ENCODE measurements at regions of chr16 and their contacts with region 1.

Region 1: GRCh38 chr16:50354629-50355456 is 13.9 kb downstream of the BRD7 start:
- DNase-seq: no peak
- ATAC-seq: no peak
- H3K4me3 ChIP-seq: no peak overlapping the region
- H3K27ac ChIP-seq: no peak overlapping the region
- H3K4me1 ChIP-seq: no peaks in the 10 kb centered on the region
- H3K27me3 ChIP-seq: no peaks in the 10 kb centered on the region
- CTCF ChIP-seq: peak; percentile 31 to 52 (median 50); a peak in 4 of 6 replicates
- EP300 ChIP-seq: no peak
- POLR2A ChIP-seq: no peak
- RAD21 ChIP-seq: no peak

Region 2: GRCh38 chr16:50024684-50025536 is 329.9 kb before region 1 on chr16 and contains the start of gene CNEP1R1:
- CTCF ChIA-PET with region 1: interaction called, 51 read pairs
- POLR2A ChIA-PET with region 1: interaction called, 3 read pairs
- RAD21 ChIA-PET with region 1: interaction called, 14 read pairs
- SMC1A ChIA-PET with region 1: interaction called, 8 read pairs
- in situ Hi-C with region 1: no loop called
- intact Hi-C with region 1: loop called (anchors 10 kb)
- DNase-seq: peak; percentile 93
- ATAC-seq: peak; percentile 98
- H3K4me3 ChIP-seq: peak within 1 kb of the TSS; percentile 76
- H3K27ac ChIP-seq: peak within 1 kb of the TSS; percentile 64
- H3K4me1 ChIP-seq: 0 out of 2 replicates have a peak, but pooled peaks cover 3% of the 10 kb centered on the region
- H3K27me3 ChIP-seq: no peaks in the 10 kb centered on the region
- CTCF ChIP-seq: peak; percentile 100; a peak in 5 of 6 replicates
- EP300 ChIP-seq: no peak
- POLR2A ChIP-seq: peak; percentile 84
- RAD21 ChIP-seq: peak; percentile 82
- polyA plus RNA-seq, gene CNEP1R1: 11.5 to 15.7 TPM

Region 3: GRCh38 chr16:50235581-50235980 is 119.3 kb before region 1 on chr16:
- CTCF ChIA-PET with region 1: interaction called, 102 read pairs
- POLR2A ChIA-PET with region 1: no interaction called
- RAD21 ChIA-PET with region 1: interaction called, 9 read pairs
- SMC1A ChIA-PET with region 1: interaction called, 8 read pairs
- in situ Hi-C with region 1: no loop called
- intact Hi-C with region 1: loop called (anchors 10 kb)
- DNase-seq: no peak
- ATAC-seq: no peak
- H3K4me3 ChIP-seq: no peak overlapping the region
- H3K27ac ChIP-seq: no peak overlapping the region
- H3K4me1 ChIP-seq: no peaks in the 10 kb centered on the region
- H3K27me3 ChIP-seq: no peaks in the 10 kb centered on the region
- CTCF ChIP-seq: no peak
- EP300 ChIP-seq: no peak
- POLR2A ChIP-seq: no peak
- RAD21 ChIP-seq: no peak

Region 4: DNA sequence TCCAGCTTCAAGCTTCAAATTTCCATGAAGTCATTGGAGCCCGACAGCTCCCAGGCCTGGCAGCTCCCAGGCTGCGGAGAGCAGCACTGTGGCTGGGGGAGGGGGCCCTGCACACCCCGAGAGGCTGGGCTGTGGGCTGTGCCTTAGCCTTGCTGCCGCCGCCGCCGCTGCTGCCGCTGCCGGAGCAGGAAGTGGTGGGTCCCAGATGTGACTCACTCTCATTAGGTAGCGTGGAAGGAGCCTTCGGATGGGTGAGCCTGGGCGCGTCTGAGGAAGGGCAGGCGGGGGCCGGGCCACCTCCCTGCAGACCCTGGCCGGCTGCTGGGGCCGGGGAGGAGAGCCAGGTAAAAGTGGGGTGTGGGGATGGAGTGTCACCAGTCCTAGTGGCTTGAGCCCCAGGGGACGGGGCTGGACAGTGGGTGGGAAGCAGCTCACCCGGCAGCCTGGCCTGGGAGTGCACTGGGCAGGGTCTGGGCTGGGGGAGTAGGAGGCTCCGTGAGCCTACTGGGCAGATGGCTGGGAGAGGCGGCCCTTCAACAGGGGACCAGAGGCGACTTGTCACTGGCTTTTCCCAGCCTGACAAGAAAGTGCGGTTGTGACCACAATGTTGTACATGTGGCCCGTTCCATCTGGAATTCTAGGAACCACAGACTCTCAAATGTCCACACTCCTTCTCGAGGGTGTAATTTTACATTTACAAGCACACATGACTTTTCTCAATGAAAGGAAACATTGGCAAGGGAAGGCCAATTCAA is 88.3 kb before region 1 on chr16 and contains the start of gene ADCY7:
- CTCF ChIA-PET with region 1: interaction called, 10 read pairs
- POLR2A ChIA-PET with region 1: no interaction called
- RAD21 ChIA-PET with region 1: interaction called, 3 read pairs
- SMC1A ChIA-PET with region 1: interaction called, 3 read pairs
- in situ Hi-C with region 1: no loop called
- intact Hi-C with region 1: no loop called
- DNase-seq: no peak
- ATAC-seq: peak; percentile 90
- H3K4me3 ChIP-seq: peak within 1 kb of the TSS; percentile 80
- H3K27ac ChIP-seq: peak within 1 kb of the TSS; percentile 87
- H3K4me1 ChIP-seq: peaks cover 34% of the 10 kb centered on the region
- H3K27me3 ChIP-seq: no peaks in the 10 kb centered on the region; a peak in 1 of 4 replicates
- CTCF ChIP-seq: no peak
- EP300 ChIP-seq: no peak
- POLR2A ChIP-seq: peak; percentile 93
- RAD21 ChIP-seq: no peak
- polyA plus RNA-seq, gene ADCY7: 1.2 to 1.3 TPM

Region 5: GRCh38 chr16:50281964-50282538 is 72.8 kb before region 1 on chr16:
- CTCF ChIA-PET with region 1: interaction called, 38 read pairs
- POLR2A ChIA-PET with region 1: no interaction called
- RAD21 ChIA-PET with region 1: interaction called, 6 read pairs
- SMC1A ChIA-PET with region 1: interaction called, 5 read pairs
- in situ Hi-C with region 1: no loop called
- intact Hi-C with region 1: no loop called
- DNase-seq: peak; percentile 86
- ATAC-seq: peak; percentile 91
- H3K4me3 ChIP-seq: peak overlapping the region; percentile 59; the same call in 1 of the 2 replicates
- H3K27ac ChIP-seq: peak overlapping the region; percentile 85
- H3K4me1 ChIP-seq: peaks cover 68% of the 10 kb centered on the region
- H3K27me3 ChIP-seq: no peaks in the 10 kb centered on the region
- CTCF ChIP-seq: no peak
- EP300 ChIP-seq: peak; percentile 86 to 94
- POLR2A ChIP-seq: no peak
- RAD21 ChIP-seq: peak; percentile 28; the same call in 1 of the 2 replicates

Region 6: DNA sequence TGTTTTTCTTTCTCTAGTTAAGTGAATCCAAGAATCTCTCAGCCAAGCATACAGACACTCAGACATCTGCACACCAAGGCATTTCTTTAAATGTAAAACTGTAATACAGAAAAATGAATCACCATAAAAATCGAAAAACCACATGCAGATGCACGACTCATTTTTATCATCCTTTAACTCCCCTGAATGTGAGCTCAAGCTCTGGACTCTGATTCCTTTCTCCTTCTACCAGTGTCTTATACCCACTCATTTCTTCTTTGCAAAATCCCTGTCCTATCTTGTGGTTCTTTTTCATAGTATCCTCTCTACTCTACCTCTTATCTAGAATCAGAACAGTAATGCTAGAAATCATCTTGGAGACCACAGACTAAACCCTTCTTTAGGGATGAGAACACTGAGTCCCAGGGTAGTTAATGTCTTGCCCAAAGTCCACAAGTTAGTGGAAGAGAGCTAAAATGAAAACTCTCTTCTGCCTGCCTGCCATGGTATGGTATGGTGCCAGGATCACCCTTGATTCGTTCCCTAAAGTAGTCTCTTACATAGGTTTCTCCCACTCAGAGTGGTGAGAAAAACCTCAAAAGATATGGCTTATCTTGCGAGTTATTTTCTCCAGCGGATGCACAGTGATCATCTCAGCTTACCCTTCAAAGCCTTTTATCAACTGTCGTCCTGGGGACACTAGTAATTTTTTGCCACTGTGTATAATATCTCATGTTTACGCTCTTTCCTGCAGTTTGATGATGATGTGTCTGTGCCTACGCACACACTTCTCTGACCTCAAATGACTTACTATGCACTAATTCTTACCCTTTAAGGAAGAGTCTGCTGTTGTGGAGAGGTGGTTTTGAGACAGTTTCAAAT is 16.2 kb before region 1 on chr16:
- CTCF ChIA-PET with region 1: interaction called, 60 read pairs
- POLR2A ChIA-PET with region 1: interaction called, 3 read pairs
- RAD21 ChIA-PET with region 1: interaction called, 6 read pairs
- SMC1A ChIA-PET with region 1: interaction called, 5 read pairs
- in situ Hi-C with region 1: no loop called
- intact Hi-C with region 1: no loop called
- DNase-seq: no peak
- ATAC-seq: no peak
- H3K4me3 ChIP-seq: no peak overlapping the region
- H3K27ac ChIP-seq: no peak overlapping the region
- H3K4me1 ChIP-seq: no peaks in the 10 kb centered on the region
- H3K27me3 ChIP-seq: no peaks in the 10 kb centered on the region
- CTCF ChIP-seq: no peak
- EP300 ChIP-seq: no peak
- POLR2A ChIP-seq: no peak
- RAD21 ChIP-seq: no peak

Region 7: DNA sequence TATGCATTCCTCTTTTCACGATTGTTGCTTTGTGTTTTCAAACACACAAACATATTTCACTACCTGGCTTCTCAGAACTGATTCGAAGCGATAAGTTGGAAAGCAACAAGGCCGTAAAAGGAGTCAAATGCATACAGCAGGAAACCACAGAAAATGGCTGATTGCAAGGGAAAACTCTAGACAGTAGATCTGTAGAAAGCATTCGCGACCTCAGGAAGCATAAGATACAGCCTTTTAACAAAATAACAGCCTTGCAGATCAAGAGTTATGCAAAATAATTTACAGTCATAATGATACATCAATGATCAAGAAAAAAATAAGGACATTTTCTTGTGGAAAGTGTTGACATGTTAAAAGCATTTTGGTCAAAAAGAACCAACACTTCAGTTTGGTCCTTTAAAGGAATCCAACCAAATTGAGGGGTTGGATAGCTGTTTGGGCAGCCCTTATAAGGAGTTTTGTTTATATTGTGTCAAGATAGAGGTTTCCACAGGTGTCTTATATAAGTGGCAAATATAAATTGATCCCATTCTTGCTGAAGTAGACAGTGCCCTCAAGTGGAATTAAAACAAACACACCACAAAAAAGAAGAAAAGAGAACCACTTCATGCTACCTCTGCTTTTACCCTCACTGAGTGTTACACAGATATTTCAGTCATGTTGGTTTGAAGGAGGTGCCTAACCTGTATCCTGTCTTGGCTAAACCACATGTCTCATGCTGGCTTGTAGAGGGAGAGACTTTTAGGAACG is 392.5 kb after region 1 on chr16:
- CTCF ChIA-PET with region 1: interaction called, 11 read pairs
- POLR2A ChIA-PET with region 1: no interaction called
- RAD21 ChIA-PET with region 1: interaction called, 6 read pairs
- SMC1A ChIA-PET with region 1: interaction called, 6 read pairs
- in situ Hi-C with region 1: no loop called
- intact Hi-C with region 1: no loop called
- DNase-seq: peak; percentile 57
- ATAC-seq: peak; percentile 73
- H3K4me3 ChIP-seq: peak overlapping the region; percentile 62; the same call in 1 of the 2 replicates
- H3K27ac ChIP-seq: peak overlapping the region; percentile 75
- H3K4me1 ChIP-seq: peaks cover 20% of the 10 kb centered on the region
- H3K27me3 ChIP-seq: no peaks in the 10 kb centered on the region
- CTCF ChIP-seq: peak; percentile 37 to 68 (median 59); a peak in 5 of 6 replicates
- EP300 ChIP-seq: no peak
- POLR2A ChIP-seq: no peak
- RAD21 ChIP-seq: peak; percentile 79